Ascending aorta (tissue), 2 donors: ENCODE measurements at regions of chr15 and their contacts with region 1.

Region 1: DNA sequence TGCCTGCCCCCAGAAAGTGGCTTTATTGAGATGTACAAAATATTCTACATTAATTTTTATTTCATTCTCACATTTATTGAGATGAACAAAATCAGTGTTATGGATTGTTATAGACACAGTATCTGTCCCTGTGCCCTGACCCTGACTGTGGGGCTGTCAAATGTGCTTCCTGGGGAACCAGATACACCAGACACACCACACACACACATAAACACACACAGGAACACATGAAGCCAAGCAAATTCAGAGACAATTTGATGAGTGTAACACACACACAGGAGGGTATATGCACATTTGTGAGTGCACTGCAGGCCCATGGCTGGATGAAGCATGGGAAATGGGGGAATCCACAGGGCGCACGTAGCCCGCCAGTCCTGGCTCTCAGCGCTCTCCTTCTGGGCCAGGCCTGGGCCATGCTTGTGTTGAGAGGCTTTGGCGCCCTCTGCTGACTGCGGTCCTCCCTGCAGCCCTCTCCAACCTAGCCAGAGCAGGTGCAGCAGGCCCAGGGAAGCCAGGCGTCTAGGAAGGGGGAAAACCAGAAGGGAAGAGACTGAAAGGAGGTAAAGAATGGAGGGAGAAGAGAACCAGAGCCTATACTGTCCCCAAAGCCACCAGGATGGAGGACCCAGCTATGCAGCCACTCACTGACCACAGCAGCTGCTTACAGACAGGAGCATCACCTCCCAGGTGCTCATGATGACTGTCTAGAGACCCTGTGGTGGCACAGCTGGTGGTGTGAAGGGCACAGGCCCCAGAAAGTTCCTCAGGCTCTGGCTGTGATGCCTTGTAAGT is 18.0 kb upstream of the LOXL1 start:
- DNase-seq: peak in 1 of 2 donors; percentile 90
- H3K4me3 ChIP-seq: no peak overlapping the region
- H3K27ac ChIP-seq: no peak overlapping the region
- H3K4me1 ChIP-seq: no peaks in the 10 kb centered on the region
- H3K27me3 ChIP-seq: no peaks in the 10 kb centered on the region
- CTCF ChIP-seq: peak; percentile 86 to 95 (median 92)

Region 2: GRCh38 chr15:72923304-72923703 is 984.9 kb before region 1 on chr15:
- intact Hi-C with region 1: no loop called
- DNase-seq: no peak
- H3K4me3 ChIP-seq: no peak overlapping the region
- H3K27ac ChIP-seq: no peak overlapping the region
- H3K4me1 ChIP-seq: no peaks in the 10 kb centered on the region
- H3K27me3 ChIP-seq: no peaks in the 10 kb centered on the region
- CTCF ChIP-seq: no peak

Region 3: DNA sequence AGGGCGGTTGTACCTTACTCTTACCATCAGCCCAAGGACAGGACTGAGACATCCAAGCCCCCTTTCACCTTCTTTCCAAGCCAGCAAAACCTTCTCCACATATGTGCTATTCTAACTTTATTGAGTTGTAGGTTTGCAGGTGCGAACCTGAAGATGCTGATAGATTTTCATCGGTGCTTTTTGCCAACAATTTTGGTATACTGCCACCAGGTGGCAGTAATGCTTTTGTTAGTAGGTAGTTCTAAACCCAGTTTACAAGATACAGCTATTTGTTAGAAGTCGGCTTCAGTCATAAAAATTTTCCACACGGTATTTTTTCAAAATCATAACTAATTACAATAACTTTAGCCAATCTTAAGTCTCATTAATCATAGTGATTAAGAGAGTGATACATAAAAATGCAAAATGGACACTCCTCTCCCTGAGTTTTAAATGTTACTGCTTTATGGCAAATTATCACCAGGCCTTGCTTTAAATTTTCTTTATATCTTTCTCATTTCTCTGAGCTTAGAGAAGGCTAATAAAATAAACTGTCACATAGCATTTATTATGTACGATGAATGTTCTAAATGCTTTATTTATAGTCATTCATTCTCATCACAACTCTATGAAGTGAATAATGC is 34.2 kb before region 1 on chr15:
- intact Hi-C with region 1: loop called (anchors 1 kb)
- DNase-seq: no peak
- H3K4me3 ChIP-seq: no peak overlapping the region
- H3K27ac ChIP-seq: no peak overlapping the region
- H3K4me1 ChIP-seq: no peaks in the 10 kb centered on the region
- H3K27me3 ChIP-seq: no peaks in the 10 kb centered on the region
- CTCF ChIP-seq: peak; percentile 53 to 77 (median 56)

Region 4: DNA sequence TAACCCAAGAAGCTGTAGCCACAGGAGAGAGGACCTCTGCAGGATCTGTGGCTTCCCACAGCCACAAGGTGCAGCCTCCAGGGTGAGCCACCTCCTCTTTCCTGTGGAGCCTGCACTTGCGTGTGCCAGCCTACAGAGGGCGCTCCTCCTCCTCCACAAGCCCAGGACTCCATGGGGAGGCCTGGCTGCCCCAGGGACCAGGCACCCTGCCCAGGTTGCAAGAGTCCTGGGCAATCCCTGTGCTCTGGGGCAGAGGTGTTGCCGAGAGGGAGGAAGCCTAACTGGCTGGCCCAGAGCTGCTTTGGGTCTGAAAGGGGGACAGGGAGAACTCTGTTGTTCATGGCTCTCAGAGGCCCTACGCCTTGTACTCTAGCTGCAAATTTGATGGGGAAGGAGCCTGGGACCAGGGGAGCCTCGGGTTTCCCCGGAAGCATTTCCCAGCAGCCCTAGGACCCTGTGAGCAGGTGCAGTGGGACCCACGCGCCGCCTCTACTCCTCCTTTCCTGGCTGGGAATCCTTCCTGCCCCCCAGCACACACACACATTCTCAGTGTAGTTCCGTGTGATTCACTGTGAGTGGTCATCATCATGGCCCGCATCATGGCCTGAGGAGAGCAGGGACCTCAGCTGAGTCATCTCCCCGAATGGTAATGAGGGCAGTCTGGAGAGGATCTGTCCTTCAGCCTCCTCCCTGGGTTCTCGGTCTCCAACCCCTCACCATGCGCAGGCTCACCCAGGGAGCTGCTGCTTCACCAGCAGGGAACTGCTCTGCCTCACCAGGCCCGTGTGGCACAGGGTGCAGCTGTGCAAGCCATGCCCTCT is 10.6 kb before region 1 on chr15:
- intact Hi-C with region 1: loop called (anchors 1 kb)
- DNase-seq: peak in 1 of 2 donors; percentile 75
- H3K4me3 ChIP-seq: no peak overlapping the region
- H3K27ac ChIP-seq: peak overlapping the region; percentile 6 to 38
- H3K4me1 ChIP-seq: peaks cover 2 to 20% of the 10 kb centered on the region in 2 donors
- H3K27me3 ChIP-seq: no peaks in the 10 kb centered on the region
- CTCF ChIP-seq: peak; percentile 81 to 93 (median 88)

Region 5: DNA sequence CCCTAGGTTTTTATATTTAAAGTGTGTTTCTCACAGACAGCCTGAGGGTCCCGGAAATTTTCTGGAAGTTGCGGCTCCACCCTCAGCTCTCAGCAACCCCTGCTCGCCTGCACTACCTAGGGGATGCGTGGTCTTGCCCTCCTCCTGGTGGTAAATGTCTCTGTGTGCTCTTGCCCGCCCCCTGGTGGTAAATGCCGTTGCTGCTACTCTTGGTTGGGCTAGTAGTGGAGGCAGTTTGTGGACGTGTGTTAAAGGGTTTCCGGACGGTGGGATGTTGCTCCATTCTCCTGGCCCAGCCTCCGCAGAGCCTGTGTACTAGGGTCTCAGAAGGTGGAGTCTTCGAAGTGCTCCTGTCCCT is 56.5 kb after region 1 on chr15:
- intact Hi-C with region 1: loop called (anchors 10 kb)
- DNase-seq: peak; percentile 59 to 94
- H3K4me3 ChIP-seq: peak overlapping the region in 1 of 2 donors; percentile 14
- H3K27ac ChIP-seq: no peak overlapping the region
- H3K4me1 ChIP-seq: peaks cover 0 to 3% of the 10 kb centered on the region in 2 donors
- H3K27me3 ChIP-seq: no peaks in the 10 kb centered on the region
- CTCF ChIP-seq: peak; percentile 97 to 98 (median 98)

Region 6: GRCh38 chr15:73982222-73982962 is 74.2 kb after region 1 on chr15:
- intact Hi-C with region 1: no loop called
- DNase-seq: peak; percentile 38 to 95
- H3K4me3 ChIP-seq: peak overlapping the region; percentile 27 to 40
- H3K27ac ChIP-seq: peak overlapping the region; percentile 97 to 99
- H3K4me1 ChIP-seq: peaks cover 25 to 44% of the 10 kb centered on the region in 2 donors
- H3K27me3 ChIP-seq: no peaks in the 10 kb centered on the region
- CTCF ChIP-seq: no peak